ENCODE measurements at regions of chr2 and their contacts with region 1.

Region 1: DNA sequence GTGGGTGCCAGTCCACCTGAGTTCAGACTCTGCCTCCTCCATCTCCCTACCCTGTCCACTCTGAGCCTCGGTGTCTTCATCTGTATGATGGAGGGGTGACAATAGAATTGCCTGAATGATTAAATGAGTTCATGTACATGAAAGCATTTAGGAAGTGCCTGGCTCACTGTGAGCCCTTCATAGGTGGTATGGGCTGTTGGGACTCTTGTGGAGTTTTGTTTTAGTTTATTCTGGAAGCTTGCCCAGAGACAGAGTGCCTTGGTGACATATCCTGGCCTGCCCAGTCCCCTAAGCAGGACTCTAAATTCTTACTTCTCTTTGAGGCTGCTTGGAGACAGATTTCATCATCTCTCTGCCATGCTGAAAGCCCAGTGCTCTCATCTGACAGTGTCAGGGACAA is 24.5 kb upstream of the GIGYF2 start:
- DNase-seq: no peak
- H3K4me3 Mint-ChIP-seq: no peak overlapping the region
- H3K27ac Mint-ChIP-seq: no peak overlapping the region
- H3K4me1 Mint-ChIP-seq: peaks cover 16% of the 10 kb centered on the region
- H3K27me3 Mint-ChIP-seq: peaks cover 17% of the 10 kb centered on the region
- CTCF ChIP-seq: no peak

Region 2: DNA sequence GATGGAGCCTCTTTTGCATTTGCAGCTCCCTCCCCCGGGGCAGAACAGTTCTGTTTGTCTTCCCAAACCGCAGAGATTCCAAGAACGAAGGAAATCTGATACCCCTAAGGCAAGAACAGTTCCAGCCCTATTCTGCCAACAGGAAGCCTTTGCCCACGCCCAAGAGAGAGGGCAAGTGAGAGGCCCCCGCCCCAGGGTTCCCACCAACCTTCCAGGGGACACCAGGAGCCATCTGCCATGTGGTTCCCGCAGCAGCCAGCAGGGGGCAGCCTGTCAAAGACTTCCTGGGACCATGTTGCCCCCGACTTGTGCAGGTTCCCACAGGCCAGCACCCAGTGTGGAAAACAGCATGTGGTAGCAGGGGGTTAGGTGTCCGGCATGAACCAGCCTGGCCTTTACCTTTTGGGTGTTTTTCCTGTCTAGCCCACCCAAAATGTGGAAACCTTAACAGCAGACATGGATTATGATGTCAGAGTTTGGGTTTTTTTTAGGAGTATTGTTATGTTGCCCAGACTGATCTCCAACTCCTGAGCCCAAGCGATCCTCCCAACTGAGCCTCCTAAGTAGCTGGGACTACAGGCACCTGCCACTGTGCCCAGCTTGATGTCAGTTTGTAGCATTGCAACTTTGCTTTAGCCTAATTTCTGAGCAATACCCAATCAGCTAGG is 60.9 kb before region 1 on chr2:
- CTCF ChIA-PET with region 1: interaction called, 3 read pairs
- intact Hi-C with region 1: loop called (anchors 5 kb)
- DNase-seq: peak; percentile 88
- H3K4me3 Mint-ChIP-seq: no peak overlapping the region
- H3K27ac Mint-ChIP-seq: no peak overlapping the region
- H3K4me1 Mint-ChIP-seq: peaks cover 9% of the 10 kb centered on the region
- H3K27me3 Mint-ChIP-seq: no peaks in the 10 kb centered on the region
- CTCF ChIP-seq: peak; percentile 87

Measured in Calu3 (cell line).